WTC11 (cell line): ENCODE measurements at regions of chr3 and their contacts with region 1.

Region 1: GRCh38 chr3:187139126-187139894 is at the start of gene RPL39L:
- DNase-seq: peak; percentile 91
- ATAC-seq: peak; percentile 91
- H3K4me3 Mint-ChIP-seq: peak within 1 kb of the TSS; percentile 80
- H3K27ac Mint-ChIP-seq: peak within 1 kb of the TSS; percentile 91
- H3K4me1 Mint-ChIP-seq: peaks cover 6% of the 10 kb centered on the region
- H3K27me3 Mint-ChIP-seq: no peaks in the 10 kb centered on the region
- CTCF ChIP-seq: peak; percentile 97
- total RNA-seq, gene RPL39L: 78.3 to 79.5 TPM (median 79.0 TPM) in 3 replicates

Region 2: GRCh38 chr3:186826976-186827731 is 312.2 kb before region 1 on chr3:
- CTCF ChIA-PET with region 1: interaction called, 12 read pairs
- POLR2A ChIA-PET with region 1: no interaction called
- DNase-seq: peak; percentile 82
- ATAC-seq: peak; percentile 82
- H3K4me3 Mint-ChIP-seq: peak overlapping the region; percentile 72
- H3K27ac Mint-ChIP-seq: no peak overlapping the region
- H3K4me1 Mint-ChIP-seq: peaks cover 38% of the 10 kb centered on the region
- H3K27me3 Mint-ChIP-seq: peaks cover 60% of the 10 kb centered on the region
- CTCF ChIP-seq: no peak

Region 3: DNA sequence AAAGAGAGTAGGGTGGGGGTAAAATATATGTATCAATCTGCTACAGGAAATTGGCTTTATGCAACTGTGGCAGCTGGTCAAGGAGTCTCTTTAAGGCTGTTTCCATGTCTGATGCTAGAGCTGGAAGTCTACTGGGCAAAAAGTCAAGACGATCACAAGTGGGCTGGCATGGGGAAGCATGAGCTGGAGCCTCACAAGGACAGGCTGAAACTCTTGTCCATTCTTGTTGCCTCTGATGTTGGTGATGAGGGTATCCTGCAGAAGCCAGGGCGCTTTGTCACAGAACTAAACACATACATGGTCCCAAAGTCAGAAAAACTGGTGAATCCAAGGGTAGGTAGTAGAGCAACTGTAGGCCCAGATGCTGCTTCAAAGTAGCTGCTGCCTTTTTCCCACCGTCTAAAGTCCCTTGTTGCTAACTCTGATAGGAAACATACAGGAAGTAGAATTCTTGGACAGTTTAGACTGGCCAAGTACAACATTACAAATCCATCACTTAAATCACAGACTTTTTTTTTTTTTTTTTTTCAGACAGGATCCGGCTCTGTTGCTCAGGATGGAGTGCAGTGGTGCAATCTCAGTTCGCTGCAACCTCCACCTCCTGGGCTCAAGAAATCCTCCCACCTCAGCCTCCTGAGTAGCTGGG is 54.2 kb before region 1 on chr3:
- CTCF ChIA-PET with region 1: interaction called, 12 read pairs
- POLR2A ChIA-PET with region 1: no interaction called
- DNase-seq: no peak
- ATAC-seq: no peak
- H3K4me3 Mint-ChIP-seq: no peak overlapping the region
- H3K27ac Mint-ChIP-seq: no peak overlapping the region
- H3K4me1 Mint-ChIP-seq: peaks cover 25% of the 10 kb centered on the region
- H3K27me3 Mint-ChIP-seq: peaks cover 2% of the 10 kb centered on the region; the same call in 1 of the 2 replicates
- CTCF ChIP-seq: no peak

Region 4: DNA sequence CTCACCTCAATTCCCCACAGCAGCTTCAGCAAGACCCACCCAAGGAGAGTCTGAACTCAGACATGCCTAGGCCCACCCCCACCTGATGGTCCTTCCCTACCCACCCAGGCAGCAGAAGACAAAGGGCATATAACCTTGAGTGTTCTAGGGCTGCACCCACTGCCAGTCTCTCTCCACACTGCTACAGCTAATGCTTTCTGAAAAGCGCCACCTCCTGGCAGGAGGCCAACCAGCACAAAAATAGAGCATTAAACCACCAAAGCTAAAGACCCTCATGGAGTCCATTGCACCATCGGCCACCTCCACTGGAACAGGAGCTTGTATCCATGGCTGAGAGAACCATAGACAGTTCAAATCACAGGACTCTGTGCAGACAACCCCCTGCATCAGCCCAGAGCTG is 11.3 kb after region 1 on chr3:
- CTCF ChIA-PET with region 1: interaction called, 55 read pairs
- POLR2A ChIA-PET with region 1: interaction called, 5 read pairs
- DNase-seq: peak; percentile 57
- ATAC-seq: peak; percentile 64
- H3K4me3 Mint-ChIP-seq: no peak overlapping the region
- H3K27ac Mint-ChIP-seq: peak overlapping the region; percentile 91
- H3K4me1 Mint-ChIP-seq: peaks cover 39% of the 10 kb centered on the region
- H3K27me3 Mint-ChIP-seq: no peaks in the 10 kb centered on the region
- CTCF ChIP-seq: no peak; the same call in 1 of the 2 replicates

Region 5: DNA sequence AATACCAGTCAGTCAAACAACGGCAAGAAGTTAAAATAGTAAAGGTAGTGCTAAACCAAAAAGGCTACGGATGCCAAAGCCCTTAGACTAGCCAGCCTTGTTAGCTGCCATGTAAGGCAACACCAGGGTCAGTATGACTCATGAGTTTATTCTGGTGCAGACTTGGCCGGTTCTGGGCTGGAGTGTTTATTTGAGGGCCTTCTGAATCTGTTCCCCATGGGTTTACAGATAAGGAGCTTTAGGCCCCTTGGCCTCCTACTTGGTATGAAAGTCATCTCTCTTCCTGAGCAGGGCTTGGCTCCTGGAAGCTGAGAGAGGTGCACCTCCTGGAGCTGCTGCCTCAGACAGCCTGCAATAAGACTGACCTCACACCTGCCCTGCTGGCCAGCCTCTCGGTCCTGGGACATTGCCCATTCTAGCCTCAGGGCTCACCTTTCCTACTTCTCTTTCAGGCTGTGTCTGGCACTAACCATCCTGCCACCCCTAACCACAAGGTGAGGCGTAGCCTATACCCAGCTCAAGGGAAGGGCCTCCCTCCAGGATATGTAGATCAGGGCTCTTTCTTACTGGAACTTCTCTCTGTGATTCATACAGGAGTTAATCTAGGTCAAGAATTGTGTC is 47.6 kb after region 1 on chr3:
- CTCF ChIA-PET with region 1: interaction called, 10 read pairs
- POLR2A ChIA-PET with region 1: no interaction called
- DNase-seq: no peak
- ATAC-seq: peak; percentile 18
- H3K4me3 Mint-ChIP-seq: no peak overlapping the region; the same call in 1 of the 2 replicates
- H3K27ac Mint-ChIP-seq: peak overlapping the region; percentile 98
- H3K4me1 Mint-ChIP-seq: peaks cover 76% of the 10 kb centered on the region
- H3K27me3 Mint-ChIP-seq: peaks cover 2% of the 10 kb centered on the region; the same call in 1 of the 2 replicates
- CTCF ChIP-seq: no peak